ENCODE measurements at regions of chr11 and their contacts with region 1.

Region 1: DNA sequence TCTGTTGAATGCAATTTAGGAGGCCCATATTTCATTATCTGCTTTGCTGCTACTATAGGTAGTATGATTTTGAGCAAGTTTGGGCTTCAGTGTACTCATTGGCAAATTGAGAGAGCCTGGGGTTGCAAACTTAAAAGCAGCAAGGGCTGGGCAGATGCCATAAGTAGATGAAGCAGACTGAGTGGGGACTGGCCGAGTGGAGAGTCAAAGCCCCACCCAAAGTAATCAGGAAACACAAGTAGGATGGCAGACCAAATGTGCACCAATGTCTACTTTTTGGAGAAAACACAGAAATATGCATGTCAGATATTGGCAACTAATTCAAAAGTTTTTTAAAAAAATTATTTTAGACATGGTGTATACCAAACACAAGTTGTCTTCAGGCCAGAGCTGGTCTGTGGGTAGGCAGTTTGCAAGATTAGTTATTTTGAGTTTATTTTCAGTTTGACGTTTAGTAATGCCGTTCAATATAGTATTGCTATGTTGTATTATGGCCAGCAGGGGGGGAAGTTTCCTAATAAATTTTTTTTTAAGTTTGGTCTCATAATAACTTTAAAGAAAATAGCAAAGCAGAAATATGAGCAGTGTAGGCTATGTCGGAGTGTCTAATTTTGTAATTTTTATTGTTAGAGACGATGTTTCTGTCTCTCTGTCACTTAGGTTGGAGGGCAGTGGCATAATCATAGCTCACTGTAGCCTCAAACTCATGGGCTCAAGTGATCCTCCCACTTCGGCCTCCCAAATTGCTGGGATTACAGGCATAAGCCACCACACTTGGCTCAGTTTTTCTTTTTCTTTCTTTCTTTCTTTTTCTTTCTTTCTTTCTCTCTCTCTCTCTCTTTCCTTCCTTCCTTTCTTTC is 105.1 kb downstream of the HIPK3 start:
- DNase-seq: peak; percentile 74
- H3K4me3 ChIP-seq: no peak overlapping the region
- H3K27ac ChIP-seq: no peak overlapping the region
- H3K4me1 ChIP-seq: peaks cover 34% of the 10 kb centered on the region
- CTCF ChIP-seq: peak; percentile 95

Region 2: GRCh38 chr11:33687733-33688479 is 325.6 kb after region 1 on chr11:
- CTCF ChIA-PET with region 1: interaction called, 3 read pairs
- POLR2A ChIA-PET with region 1: interaction called, 3 read pairs
- intact Hi-C with region 1: loop called (anchors 1 kb)
- DNase-seq: peak; percentile 74
- H3K4me3 ChIP-seq: no peak overlapping the region
- H3K27ac ChIP-seq: no peak overlapping the region
- H3K4me1 ChIP-seq: peaks cover 4% of the 10 kb centered on the region
- CTCF ChIP-seq: peak; percentile 97

Region 3: DNA sequence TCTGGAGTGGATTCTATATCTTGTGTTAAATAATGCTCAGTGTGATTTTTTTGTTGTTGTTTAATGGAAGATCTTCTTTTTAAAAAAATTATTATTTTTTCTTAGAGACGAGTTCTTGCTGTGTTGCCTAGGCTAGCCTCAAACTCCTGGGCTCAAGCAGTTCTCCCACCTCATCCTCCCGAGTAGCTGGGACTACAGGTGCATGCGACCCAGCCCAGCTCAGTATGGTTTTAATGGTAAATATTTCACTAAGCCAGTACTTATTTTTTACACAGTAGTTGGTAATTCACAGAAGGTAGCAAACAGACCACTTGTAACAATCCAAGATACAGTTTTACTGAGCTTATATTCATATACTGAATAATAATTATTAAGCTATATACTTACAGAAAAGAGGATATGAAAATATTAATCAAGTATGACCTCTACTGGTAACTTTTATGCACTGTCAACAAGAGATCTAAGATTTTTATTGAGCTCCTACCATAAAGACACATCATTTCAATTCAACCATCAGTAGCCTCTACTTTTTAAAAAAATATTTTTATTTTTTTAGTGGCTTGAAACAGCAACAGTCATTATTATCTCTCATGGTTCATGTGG is 380.1 kb after region 1 on chr11:
- CTCF ChIA-PET with region 1: no interaction called
- POLR2A ChIA-PET with region 1: interaction called, 4 read pairs
- intact Hi-C with region 1: loop called (anchors 2 kb)
- DNase-seq: peak; percentile 36
- H3K4me3 ChIP-seq: no peak overlapping the region
- H3K27ac ChIP-seq: no peak overlapping the region
- H3K4me1 ChIP-seq: no peaks in the 10 kb centered on the region
- CTCF ChIP-seq: peak; percentile 88